Transverse colon (tissue), 4 donors: ENCODE measurements at regions of chr10 and their contacts with region 1.

Region 1: DNA sequence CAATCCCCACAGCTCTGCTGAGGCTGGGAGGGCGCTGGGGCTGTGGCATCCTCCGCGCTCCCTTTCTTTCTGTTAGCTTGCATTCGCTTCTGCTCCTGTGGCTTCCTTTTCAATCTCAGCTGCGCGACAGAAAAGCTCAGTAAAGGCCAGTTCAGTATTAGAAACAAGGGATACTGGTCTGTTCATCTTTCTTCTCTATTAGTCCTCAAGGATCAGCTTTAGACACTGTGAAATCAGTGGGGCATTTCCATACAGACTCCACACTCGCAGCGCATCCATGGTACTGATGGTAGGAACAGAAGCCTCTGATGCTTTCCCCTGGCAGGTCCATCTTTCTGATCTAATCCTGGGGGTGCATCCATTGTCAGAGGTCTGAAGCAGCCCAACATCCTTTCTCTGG is 163.7 kb downstream of the LYZL1 start:
- DNase-seq: no peak
- H3K4me3 ChIP-seq: no peak overlapping the region
- H3K27ac ChIP-seq: no peak overlapping the region
- H3K4me1 ChIP-seq: peaks cover 0 to 3% (median 1%) of the 10 kb centered on the region in 4 donors
- H3K27me3 ChIP-seq: no peaks in the 10 kb centered on the region
- CTCF ChIP-seq: no peak
- EP300 ChIP-seq: no peak
- POLR2A ChIP-seq: no peak

Region 2: GRCh38 chr10:29377333-29377961 is 75.1 kb before region 1 on chr10:
- in situ Hi-C with region 1: loop called in 1 of 4 experiments (anchors 5 kb)
- intact Hi-C with region 1: no loop called
- DNase-seq: no peak
- H3K4me3 ChIP-seq: no peak overlapping the region
- H3K27ac ChIP-seq: no peak overlapping the region
- H3K4me1 ChIP-seq: no peaks in the 10 kb centered on the region
- H3K27me3 ChIP-seq: no peaks in the 10 kb centered on the region
- CTCF ChIP-seq: peak; percentile 56 to 76 (median 66)
- EP300 ChIP-seq: no peak
- POLR2A ChIP-seq: no peak

Region 3: DNA sequence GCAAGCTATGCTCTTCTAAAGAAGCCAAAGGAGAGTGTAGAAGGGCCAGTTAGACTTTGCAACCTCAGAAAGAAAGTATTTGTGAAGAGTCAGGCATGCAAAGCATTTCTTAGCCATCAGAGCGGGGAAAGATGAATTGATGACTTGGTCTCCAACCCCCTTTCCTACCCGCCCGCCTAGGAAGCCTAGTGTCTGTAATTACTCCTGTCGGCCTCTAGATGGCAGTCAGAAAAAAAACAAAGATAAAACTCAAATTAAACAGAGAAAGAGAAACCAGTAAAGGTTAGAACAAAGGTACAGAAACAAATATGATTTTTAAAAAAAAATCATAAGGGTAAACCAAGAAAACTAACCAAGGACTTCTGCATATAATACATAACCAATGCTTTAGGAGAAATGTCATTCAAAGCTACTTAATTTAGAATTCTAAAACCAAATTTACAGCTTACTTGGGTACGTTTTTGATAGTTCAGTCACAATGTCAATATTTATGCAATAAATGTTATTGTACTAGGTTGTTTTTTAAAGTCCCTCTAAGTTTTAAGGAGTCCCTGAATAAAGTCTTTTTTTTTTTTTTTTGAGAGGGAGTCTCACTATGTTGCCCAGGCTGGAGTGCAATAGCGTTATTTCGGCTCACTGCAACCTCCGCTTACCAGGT is 66.1 kb before region 1 on chr10:
- in situ Hi-C with region 1: loop called in 1 of 4 experiments (anchors 5 kb)
- intact Hi-C with region 1: loop called (anchors 5 kb)
- DNase-seq: no peak
- H3K4me3 ChIP-seq: no peak overlapping the region
- H3K27ac ChIP-seq: no peak overlapping the region
- H3K4me1 ChIP-seq: peaks cover 0 to 3% (median 0%) of the 10 kb centered on the region in 4 donors
- H3K27me3 ChIP-seq: no peaks in the 10 kb centered on the region
- CTCF ChIP-seq: peak; percentile 74 to 78 (median 75)
- EP300 ChIP-seq: no peak
- POLR2A ChIP-seq: no peak

Region 4: DNA sequence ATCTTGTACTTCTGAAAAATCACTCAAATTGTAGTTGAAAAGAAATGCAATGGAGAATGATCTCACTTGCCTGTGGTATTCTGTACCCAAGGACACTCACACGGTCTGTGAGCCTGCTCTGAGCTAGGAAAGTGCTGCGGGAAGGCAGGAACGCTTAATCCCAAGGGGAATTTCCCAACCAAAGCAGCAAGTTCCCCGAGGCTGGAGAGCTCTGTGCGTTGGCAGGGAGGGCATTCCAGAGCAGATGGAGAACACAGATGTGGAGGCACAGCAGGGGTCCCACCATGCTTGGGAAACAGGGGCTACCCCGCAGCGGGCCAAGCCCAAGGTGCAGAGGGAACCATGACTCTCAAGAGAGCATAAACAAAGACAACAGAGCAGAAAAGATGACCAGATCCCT is 168.6 kb after region 1 on chr10:
- in situ Hi-C with region 1: no loop called
- intact Hi-C with region 1: no loop called
- DNase-seq: no peak
- H3K4me3 ChIP-seq: no peak overlapping the region
- H3K27ac ChIP-seq: peak overlapping the region; percentile 86 to 91 (median 88)
- H3K4me1 ChIP-seq: peaks cover 9 to 91% (median 47%) of the 10 kb centered on the region in 4 donors
- H3K27me3 ChIP-seq: no peaks in the 10 kb centered on the region
- CTCF ChIP-seq: no peak
- EP300 ChIP-seq: no peak
- POLR2A ChIP-seq: no peak